ENCODE measurements at regions of chr15 and their contacts with region 1.

Region 1: DNA sequence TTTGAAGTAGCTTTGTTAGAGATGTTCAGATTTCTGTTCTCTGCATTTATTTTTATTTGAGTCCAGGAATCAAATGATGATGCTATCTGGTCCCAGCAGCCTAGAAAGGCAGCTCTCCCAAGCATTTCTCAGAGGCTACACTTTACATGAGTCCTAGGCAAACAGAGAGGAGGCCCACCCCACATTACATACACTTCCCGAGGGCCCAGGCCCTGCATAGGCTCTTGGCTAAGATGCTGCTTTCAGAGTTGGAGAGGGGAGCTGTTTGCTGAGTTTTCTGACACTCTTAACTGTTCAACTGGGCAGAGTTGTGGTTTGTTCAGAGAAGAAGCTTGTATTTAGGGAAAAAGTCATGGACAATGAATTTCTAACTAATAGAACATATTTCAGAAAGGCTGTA is 117.9 kb upstream of the RGMA start:
- DNase-seq: no peak
- H3K4me3 ChIP-seq: no peak overlapping the region
- H3K4me3 Mint-ChIP-seq: no peak overlapping the region
- H3K27ac Mint-ChIP-seq: no peak overlapping the region
- H3K4me1 ChIP-seq: peaks cover 6% of the 10 kb centered on the region; the same call in 1 of the 2 replicates
- H3K4me1 Mint-ChIP-seq: peaks cover 12% of the 10 kb centered on the region
- H3K27me3 ChIP-seq: no peaks in the 10 kb centered on the region
- H3K27me3 Mint-ChIP-seq: no peaks in the 10 kb centered on the region
- CTCF ChIP-seq: no peak

Region 2: GRCh38 chr15:92797168-92797951 is 409.5 kb before region 1 on chr15:
- CTCF ChIA-PET with region 1: no interaction called
- POLR2A ChIA-PET with region 1: interaction called, 12 read pairs
- intact Hi-C with region 1: no loop called
- DNase-seq: peak in 1 of 2 experiments; percentile 77
- H3K4me3 ChIP-seq: no peak overlapping the region
- H3K4me3 Mint-ChIP-seq: peak overlapping the region; percentile 50
- H3K27ac Mint-ChIP-seq: peak overlapping the region; percentile 94
- H3K4me1 ChIP-seq: peaks cover 42% of the 10 kb centered on the region
- H3K4me1 Mint-ChIP-seq: peaks cover 17% of the 10 kb centered on the region
- H3K27me3 ChIP-seq: no peaks in the 10 kb centered on the region
- H3K27me3 Mint-ChIP-seq: no peaks in the 10 kb centered on the region
- CTCF ChIP-seq: peak; percentile 55 to 56

Region 3: DNA sequence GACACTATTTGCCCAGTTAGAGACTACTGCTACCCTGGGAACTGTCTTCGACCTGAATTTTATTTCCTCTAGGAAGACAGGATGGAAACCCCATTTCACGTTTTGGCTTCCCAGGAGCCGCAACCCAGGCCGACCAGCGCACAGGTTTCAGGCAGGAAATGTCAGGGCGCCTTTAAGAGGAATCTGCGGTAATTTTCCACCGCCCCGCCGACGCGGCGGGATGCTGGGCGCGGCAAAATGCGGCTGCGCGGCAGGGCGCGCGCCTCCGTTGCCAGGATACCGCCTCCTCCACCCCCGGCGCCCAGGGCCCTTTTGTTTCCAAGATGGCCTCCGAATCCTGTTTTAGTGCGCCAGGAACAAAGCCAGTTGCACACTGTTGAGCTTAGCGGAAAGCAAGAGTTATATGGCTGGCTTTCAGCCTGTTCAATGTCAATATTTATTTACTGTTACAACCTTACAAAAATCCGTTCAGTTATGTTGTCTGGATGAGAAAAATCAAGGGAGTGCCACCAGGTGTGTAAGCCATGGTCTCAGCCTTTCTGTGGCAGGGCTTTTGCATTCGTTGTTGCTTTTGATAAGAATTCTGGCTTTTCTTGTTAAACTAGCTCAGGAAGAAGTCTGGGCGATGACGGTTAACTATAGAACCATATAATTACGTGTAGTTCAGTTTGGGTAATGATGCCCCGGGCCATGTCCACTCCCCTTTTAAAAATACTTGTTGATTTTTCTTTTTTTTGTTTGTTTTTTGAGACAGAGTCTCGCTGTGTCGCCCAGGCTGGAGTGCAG is 386.5 kb before region 1 on chr15:
- CTCF ChIA-PET with region 1: no interaction called
- POLR2A ChIA-PET with region 1: no interaction called
- intact Hi-C with region 1: no loop called
- DNase-seq: peak; percentile 93 to 95
- H3K4me3 ChIP-seq: peak overlapping the region; percentile 17
- H3K4me3 Mint-ChIP-seq: peak overlapping the region; percentile 83
- H3K27ac Mint-ChIP-seq: peak overlapping the region; percentile 94
- H3K4me1 ChIP-seq: peaks cover 38% of the 10 kb centered on the region
- H3K4me1 Mint-ChIP-seq: peaks cover 33% of the 10 kb centered on the region
- H3K27me3 ChIP-seq: no peaks in the 10 kb centered on the region
- H3K27me3 Mint-ChIP-seq: no peaks in the 10 kb centered on the region
- CTCF ChIP-seq: no peak

Region 4: GRCh38 chr15:93235926-93236780 is 29.3 kb after region 1 on chr15:
- CTCF ChIA-PET with region 1: no interaction called
- POLR2A ChIA-PET with region 1: no interaction called
- intact Hi-C with region 1: loop called (anchors 2 kb)
- DNase-seq: peak; percentile 60 to 63
- H3K4me3 ChIP-seq: peak overlapping the region; percentile 22
- H3K4me3 Mint-ChIP-seq: peak overlapping the region; percentile 69
- H3K27ac Mint-ChIP-seq: peak overlapping the region; percentile 79
- H3K4me1 ChIP-seq: peaks cover 12% of the 10 kb centered on the region; the same call in 1 of the 2 replicates
- H3K4me1 Mint-ChIP-seq: peaks cover 11% of the 10 kb centered on the region
- H3K27me3 ChIP-seq: no peaks in the 10 kb centered on the region
- H3K27me3 Mint-ChIP-seq: no peaks in the 10 kb centered on the region
- CTCF ChIP-seq: no peak

Region 5: GRCh38 chr15:93372221-93372869 is 165.5 kb after region 1 on chr15:
- CTCF ChIA-PET with region 1: no interaction called
- POLR2A ChIA-PET with region 1: no interaction called
- intact Hi-C with region 1: no loop called
- DNase-seq: no peak
- H3K4me3 ChIP-seq: no peak overlapping the region
- H3K4me3 Mint-ChIP-seq: no peak overlapping the region
- H3K27ac Mint-ChIP-seq: no peak overlapping the region
- H3K4me1 ChIP-seq: no peaks in the 10 kb centered on the region
- H3K4me1 Mint-ChIP-seq: no peaks in the 10 kb centered on the region
- H3K27me3 ChIP-seq: no peaks in the 10 kb centered on the region
- H3K27me3 Mint-ChIP-seq: no peaks in the 10 kb centered on the region
- CTCF ChIP-seq: no peak